Endothelial cell of umbilical vein (primary cell): ENCODE measurements at regions of chr15 and their contacts with region 1.

Region 1: DNA sequence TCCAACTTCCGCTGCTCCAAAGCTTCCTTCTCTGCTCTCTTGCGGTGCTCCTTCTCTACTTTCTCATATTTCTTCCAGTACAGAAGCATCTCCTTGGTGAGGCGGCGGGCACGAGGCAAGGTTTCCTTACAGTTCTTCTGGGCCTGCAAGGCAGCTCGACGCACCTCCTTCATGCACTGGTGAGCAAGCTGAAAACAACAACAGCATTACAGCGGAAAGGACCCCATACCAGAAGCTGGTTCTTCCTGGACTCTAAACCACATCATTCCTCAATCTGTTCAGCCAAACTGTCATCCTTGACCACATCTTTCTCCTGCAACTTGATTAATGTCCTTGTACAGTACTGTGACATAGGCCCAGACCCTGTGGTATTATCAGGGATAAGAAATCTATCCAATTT is 36.4 kb downstream of the INO80 start:
- DNase-seq: no peak
- H3K4me3 ChIP-seq: no peak overlapping the region
- H3K27ac ChIP-seq: no peak overlapping the region
- H3K4me1 ChIP-seq: no peaks in the 10 kb centered on the region
- H3K27me3 ChIP-seq: no peaks in the 10 kb centered on the region
- CTCF ChIP-seq: no peak
- POLR2A ChIP-seq: no peak

Region 2: GRCh38 chr15:40948706-40949473 is 130.8 kb before region 1 on chr15:
- CTCF ChIA-PET with region 1: no interaction called
- POLR2A ChIA-PET with region 1: no interaction called
- dilution Hi-C with region 1: no loop called
- intact Hi-C with region 1: no loop called
- DNase-seq: no peak
- H3K4me3 ChIP-seq: no peak overlapping the region
- H3K27ac ChIP-seq: no peak overlapping the region
- H3K4me1 ChIP-seq: peaks cover 8% of the 10 kb centered on the region
- H3K27me3 ChIP-seq: no peaks in the 10 kb centered on the region
- CTCF ChIP-seq: no peak
- POLR2A ChIP-seq: no peak

Region 3: DNA sequence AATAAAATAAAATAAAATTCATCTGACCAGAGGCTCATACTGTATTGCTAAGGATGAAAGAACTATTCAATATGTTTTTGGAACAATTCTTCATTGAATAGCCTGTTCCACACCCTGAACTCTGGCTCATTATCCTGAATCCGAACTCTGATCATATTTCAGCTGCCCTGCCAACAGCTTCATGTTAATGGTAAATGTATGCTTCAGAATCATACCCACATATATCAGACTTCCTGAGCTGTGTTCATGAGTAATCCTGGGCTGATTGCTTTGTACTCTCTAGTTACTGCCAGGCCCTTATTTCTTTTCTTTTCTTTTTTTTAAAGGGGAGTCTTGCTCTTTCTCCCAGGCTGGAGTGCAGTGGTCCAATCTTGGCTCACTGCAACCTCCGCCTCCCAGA is 24.5 kb after region 1 on chr15:
- CTCF ChIA-PET with region 1: no interaction called
- POLR2A ChIA-PET with region 1: interaction called, 13 read pairs
- dilution Hi-C with region 1: no loop called
- intact Hi-C with region 1: no loop called
- DNase-seq: peak; percentile 70
- H3K4me3 ChIP-seq: no peak overlapping the region
- H3K27ac ChIP-seq: no peak overlapping the region
- H3K4me1 ChIP-seq: peaks cover 2% of the 10 kb centered on the region
- H3K27me3 ChIP-seq: no peaks in the 10 kb centered on the region
- CTCF ChIP-seq: no peak
- POLR2A ChIP-seq: no peak